ENCODE measurements at regions of chr1 and their contacts with region 1.

Region 1: DNA sequence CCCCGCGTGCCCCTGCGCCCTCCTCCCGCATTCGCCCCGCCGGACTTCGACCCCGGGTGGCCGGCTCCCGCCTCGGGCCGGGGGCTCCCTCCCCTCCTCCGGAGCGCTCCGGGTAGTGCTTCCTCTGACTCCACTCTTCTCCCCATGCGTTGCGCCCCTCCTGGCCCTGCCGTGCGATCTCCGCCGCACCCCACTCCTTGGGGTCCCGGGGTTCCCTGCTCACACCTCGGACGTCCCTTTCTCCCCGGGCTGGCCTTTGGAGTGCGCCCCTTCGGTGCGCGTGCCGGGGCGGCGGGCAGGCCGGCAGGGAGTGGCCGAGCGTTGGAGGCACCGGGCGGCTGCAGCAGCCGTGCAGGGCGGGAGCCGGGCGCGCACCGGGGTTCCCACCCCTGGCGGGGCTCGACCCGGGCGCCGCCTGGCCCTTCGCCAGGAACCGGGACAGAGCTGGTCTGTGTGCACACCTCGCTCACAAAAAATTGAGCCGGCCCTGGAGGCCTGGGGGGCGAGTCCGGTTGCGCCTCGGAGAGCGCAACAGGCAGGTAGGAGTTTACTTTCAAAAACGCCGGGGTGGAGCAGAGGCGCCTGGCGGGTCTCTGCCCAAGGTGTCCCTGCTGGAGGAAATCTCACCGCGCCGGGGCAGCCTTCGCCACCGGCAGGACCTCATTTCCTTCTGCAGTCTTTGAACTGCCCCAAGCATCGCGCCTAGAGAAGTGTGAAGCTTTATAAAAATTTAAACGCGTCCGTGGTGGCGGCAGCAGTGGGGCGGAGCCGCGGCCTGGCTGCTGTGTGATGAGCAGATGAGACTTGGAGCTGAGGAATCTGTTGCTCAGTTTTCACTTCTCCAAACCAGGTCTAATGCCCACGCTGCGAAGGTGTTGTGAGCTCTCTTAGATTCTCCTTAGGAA is 650 bp downstream of the VANGL1 start:
- DNase-seq: peak; percentile 61
- H3K4me3 ChIP-seq: peak overlapping the region; percentile 83
- H3K27ac ChIP-seq: peak overlapping the region; percentile 73
- H3K4me1 ChIP-seq: peaks cover 11% of the 10 kb centered on the region
- H3K27me3 ChIP-seq: no peaks in the 10 kb centered on the region
- CTCF ChIP-seq: 0 out of 2 replicates have a peak, but pooled peaks have one; percentile 14

Region 2: DNA sequence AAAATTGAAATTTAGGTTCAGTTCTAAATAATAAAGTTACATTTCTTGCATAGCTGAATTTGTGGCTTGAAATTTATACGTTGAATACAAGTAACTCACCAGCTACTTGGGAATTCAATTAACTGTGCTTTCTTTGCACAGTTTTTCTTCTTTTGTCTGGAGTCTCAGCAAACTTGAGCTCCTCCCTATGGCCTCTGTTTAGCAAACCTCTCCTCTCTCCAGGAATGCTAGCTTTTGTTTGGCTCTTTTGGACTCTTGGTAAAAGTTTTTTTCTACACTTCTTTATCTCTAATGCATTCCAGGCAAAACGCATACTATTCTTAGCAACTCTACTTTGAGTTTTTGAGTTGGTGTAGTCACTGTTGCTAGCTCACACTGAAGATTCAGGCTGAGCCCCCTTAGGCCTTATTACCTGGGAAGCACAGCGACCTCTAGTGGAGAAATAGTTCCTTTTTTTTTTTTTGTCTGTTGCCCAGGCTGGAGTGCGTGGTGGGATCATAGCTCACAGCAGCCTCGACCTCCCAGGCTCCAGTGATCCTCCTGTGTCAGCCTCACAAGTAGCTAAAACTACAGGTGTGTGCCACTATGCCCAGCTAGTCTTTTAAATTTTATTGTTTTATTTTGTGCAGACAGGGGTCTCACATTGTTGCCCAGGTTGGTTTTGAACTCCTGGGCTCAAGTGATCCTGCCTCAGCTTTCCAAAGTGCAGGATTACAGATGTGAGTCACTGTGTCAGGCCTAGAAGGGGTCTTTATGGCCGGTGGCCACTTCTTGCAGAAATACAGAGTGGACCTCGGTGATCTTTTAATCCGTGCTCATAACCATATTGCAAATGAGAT is 64.4 kb after region 1 on chr1:
- CTCF ChIA-PET with region 1: interaction called, 3 read pairs
- POLR2A ChIA-PET with region 1: no interaction called
- intact Hi-C with region 1: loop called (anchors 2 kb)
- DNase-seq: peak; percentile 84
- H3K4me3 ChIP-seq: no peak overlapping the region
- H3K27ac ChIP-seq: no peak overlapping the region
- H3K4me1 ChIP-seq: peaks cover 23% of the 10 kb centered on the region
- H3K27me3 ChIP-seq: no peaks in the 10 kb centered on the region
- CTCF ChIP-seq: peak; percentile 89

Measured in A673 (cell line).